ENCODE measurements at regions of chr5 and their contacts with region 1.

Region 1: DNA sequence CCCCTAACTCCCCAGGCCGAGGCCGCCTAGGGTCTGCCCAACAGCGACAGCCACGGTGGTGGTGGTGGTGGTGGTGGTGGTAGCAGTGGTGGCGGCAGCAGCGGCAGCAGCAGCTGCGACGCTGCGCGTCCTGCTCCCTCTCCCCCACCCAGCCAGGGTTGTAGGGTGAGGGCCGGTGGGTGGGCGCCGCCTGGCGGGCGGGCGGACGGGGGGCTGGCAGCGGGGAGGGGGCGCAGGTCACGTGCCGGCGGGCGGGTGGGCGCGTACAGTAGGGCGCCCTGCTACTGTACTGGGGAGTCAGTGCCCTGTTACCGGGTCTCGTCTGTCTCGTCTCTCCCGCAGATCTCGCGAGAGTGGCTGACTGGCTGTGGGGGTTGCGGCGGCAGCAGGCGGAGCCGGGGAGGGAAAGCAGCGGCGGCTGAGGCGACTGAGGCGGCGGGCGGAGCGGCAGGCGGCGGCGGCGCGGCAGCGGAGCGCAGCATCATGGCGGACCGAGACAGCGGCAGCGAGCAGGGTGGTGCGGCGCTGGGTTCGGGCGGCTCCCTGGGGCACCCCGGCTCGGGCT is at the start of gene PURA:
- DNase-seq: peak; percentile 94 to 98 (median 97)
- ATAC-seq: peak; percentile 93
- H3K4me3 ChIP-seq: peak within 1 kb of the TSS; percentile 77
- H3K4me3 Mint-ChIP-seq: peak within 1 kb of the TSS; percentile 86 to 97 (median 94)
- H3K27ac ChIP-seq: peak within 1 kb of the TSS; percentile 89
- H3K27ac Mint-ChIP-seq: peak within 1 kb of the TSS; percentile 88 to 99 (median 95)
- H3K4me1 ChIP-seq: peaks cover 46 to 57% of the 10 kb centered on the region in 2 donors
- H3K4me1 Mint-ChIP-seq: peaks cover 53 to 95% (median 77%) of the 10 kb centered on the region in 7 donors
- H3K27me3 ChIP-seq: peaks cover 0 to 7% of the 10 kb centered on the region in 2 donors
- H3K27me3 Mint-ChIP-seq: peaks cover 0 to 46% (median 4%) of the 10 kb centered on the region in 5 donors
- total RNA-seq, gene PURA: 11.6 to 33.5 (median 13.9) TPM

Region 2: DNA sequence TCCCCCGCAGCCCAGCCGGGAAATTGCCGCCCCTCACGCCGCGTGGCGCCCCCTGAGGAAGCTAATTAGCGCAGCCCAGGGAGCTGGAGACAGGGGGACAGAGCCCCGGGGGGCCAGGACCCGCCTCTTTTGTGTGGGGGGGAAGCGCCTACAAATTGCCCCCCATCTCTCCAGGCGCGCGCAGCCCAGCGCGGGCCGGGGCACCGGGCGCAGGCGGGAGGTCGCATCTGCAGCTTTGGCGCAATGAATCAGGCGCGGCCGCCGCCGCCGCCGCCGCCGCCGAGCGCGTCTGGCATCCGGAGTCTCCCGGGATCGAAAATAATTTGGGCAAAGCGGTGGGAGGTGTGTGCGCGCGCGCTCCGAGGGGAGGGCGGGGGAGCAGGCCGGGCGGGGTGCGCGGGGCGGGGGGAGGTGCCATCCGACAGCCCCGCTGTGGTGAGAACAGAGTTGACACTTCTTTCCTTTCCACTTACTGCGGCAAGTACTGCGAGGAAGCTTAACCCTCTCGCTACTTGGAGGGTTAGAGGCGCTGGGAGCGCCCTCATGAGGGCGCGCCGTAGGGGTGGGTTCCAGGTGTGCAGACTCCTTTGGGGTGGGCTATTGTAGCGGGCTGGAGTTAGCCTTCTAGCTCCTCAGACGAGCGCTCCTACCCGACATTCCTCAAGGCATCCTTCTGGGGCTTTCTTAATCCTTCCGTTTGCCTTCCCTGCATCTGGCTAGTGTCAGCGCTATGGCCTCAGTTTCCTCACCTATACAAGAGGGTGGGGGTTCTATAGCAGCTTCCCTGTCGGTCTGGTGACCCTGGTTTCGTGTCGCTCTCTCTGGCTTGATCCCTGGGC is 402.5 kb before region 1 on chr5:
- CTCF ChIA-PET with region 1: no interaction called
- POLR2A ChIA-PET with region 1: no interaction called
- intact Hi-C with region 1: loop called in 1 of 2 experiments (anchors 2 kb)
- DNase-seq: peak; percentile 37 to 74 (median 53)
- ATAC-seq: peak; percentile 75
- H3K4me3 ChIP-seq: peak overlapping the region; percentile 58
- H3K4me3 Mint-ChIP-seq: peak overlapping the region; percentile 74 to 85 (median 80)
- H3K27ac ChIP-seq: peak overlapping the region; percentile 63
- H3K27ac Mint-ChIP-seq: peak overlapping the region in 6 of 9 donors; percentile 25 to 87 (median 64)
- H3K4me1 ChIP-seq: peaks cover 14 to 19% of the 10 kb centered on the region in 2 donors
- H3K4me1 Mint-ChIP-seq: peaks cover 10 to 31% (median 23%) of the 10 kb centered on the region in 7 donors
- H3K27me3 ChIP-seq: no peaks in the 10 kb centered on the region
- H3K27me3 Mint-ChIP-seq: peaks cover 0 to 51% (median 0%) of the 10 kb centered on the region in 5 donors

Region 3: DNA sequence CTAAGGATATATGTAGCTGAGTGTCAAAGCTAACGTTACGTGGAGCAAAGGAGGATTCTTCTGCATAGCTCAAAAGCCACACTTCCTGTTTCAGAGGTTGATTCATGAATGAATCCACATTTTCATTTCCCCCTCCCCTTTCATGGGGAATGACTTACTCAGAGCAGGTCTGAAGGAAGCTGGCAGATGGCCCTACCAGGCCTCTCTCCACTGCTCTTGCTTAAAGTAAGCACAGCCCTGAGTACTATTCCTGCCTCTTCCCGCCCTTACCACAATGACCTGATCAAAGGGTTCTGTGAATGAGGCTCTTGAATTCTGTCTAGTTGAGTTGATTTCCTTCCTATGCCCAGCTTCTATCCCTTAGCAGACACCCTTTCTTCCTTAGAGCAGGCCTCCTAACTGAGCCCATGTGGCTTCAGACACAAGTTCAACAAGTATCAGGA is 18.2 kb after region 1 on chr5:
- CTCF ChIA-PET with region 1: interaction called, 4 read pairs
- POLR2A ChIA-PET with region 1: interaction called, 7 read pairs
- intact Hi-C with region 1: loop called in 1 of 2 experiments (anchors 1 kb)
- DNase-seq: peak in 2 of 9 donors; percentile 18 to 36
- ATAC-seq: peak; percentile 85
- H3K4me3 ChIP-seq: no peak overlapping the region
- H3K4me3 Mint-ChIP-seq: peak overlapping the region in 6 of 10 donors; percentile 18 to 59 (median 45)
- H3K27ac ChIP-seq: no peak overlapping the region
- H3K27ac Mint-ChIP-seq: peak overlapping the region in 5 of 9 donors; percentile 0 to 62 (median 40)
- H3K4me1 ChIP-seq: peaks cover 8 to 14% of the 10 kb centered on the region in 2 donors
- H3K4me1 Mint-ChIP-seq: peaks cover 30 to 69% (median 53%) of the 10 kb centered on the region in 7 donors
- H3K27me3 ChIP-seq: no peaks in the 10 kb centered on the region
- H3K27me3 Mint-ChIP-seq: peaks cover 0 to 5% (median 0%) of the 10 kb centered on the region in 5 donors

Region 4: DNA sequence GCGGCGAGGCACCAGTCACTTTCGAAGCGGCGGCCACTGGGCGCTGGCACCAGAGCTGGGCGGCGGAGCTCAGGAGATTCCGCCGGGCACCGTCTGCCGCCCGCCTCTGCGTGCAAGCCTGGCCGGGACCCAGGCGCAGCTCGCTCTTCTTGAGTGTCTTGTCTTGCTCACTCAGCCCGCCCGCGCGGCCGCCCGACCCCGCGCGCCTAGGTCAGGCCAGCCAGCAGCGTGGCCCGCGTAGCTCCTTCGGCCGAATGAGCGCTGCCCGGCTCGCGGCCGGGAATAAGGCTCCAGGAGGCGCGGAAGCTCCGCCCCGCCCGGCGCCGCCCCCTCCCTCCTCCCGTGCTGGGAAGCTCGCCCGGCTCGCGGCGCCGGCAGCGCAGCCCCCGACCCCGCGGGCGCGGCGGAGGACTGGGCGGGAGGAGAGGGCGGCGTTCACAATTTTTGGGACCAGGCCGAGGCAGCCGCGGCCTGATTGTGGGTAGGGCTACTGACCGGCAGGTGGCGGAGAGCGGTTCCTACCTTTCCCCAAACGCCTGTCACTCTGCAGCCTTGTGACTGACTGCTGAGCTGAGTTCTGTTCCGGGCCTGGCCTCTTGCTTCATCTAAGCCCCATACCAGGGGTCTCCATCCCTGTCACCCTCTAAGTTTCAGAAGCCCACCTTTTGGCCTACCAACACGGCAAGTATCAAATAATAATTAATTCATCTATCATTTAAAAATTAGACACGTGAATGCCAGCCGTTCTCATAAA is 232.7 kb after region 1 on chr5 and contains the start of gene HBEGF:
- CTCF ChIA-PET with region 1: no interaction called
- POLR2A ChIA-PET with region 1: no interaction called
- intact Hi-C with region 1: loop called in 1 of 2 experiments (anchors 10 kb)
- DNase-seq: peak; percentile 19 to 74 (median 42)
- ATAC-seq: peak; percentile 73
- H3K4me3 ChIP-seq: peak within 1 kb of the TSS; percentile 49
- H3K4me3 Mint-ChIP-seq: peak within 1 kb of the TSS; percentile 73 to 91 (median 84)
- H3K27ac ChIP-seq: peak within 1 kb of the TSS; percentile 57
- H3K27ac Mint-ChIP-seq: peak within 1 kb of the TSS in 8 of 9 donors; percentile 33 to 94 (median 62)
- H3K4me1 ChIP-seq: peaks cover 10 to 40% of the 10 kb centered on the region in 2 donors
- H3K4me1 Mint-ChIP-seq: peaks cover 33 to 68% (median 52%) of the 10 kb centered on the region in 7 donors
- H3K27me3 ChIP-seq: no peaks in the 10 kb centered on the region
- H3K27me3 Mint-ChIP-seq: peaks cover 0 to 17% (median 5%) of the 10 kb centered on the region in 5 donors
- total RNA-seq, gene HBEGF: 0.35 to 95.5 (median 11.6) TPM

Region 5: GRCh38 chr5:140647042-140647341 is 533.2 kb after region 1 on chr5:
- CTCF ChIA-PET with region 1: no interaction called
- POLR2A ChIA-PET with region 1: no interaction called
- intact Hi-C with region 1: loop called (anchors 1 to 2 kb)
- DNase-seq: no peak
- ATAC-seq: no peak
- H3K4me3 ChIP-seq: peak overlapping the region; percentile 80
- H3K4me3 Mint-ChIP-seq: peak overlapping the region; percentile 88 to 100 (median 98)
- H3K27ac ChIP-seq: peak overlapping the region; percentile 95
- H3K27ac Mint-ChIP-seq: peak overlapping the region; percentile 93 to 100 (median 99)
- H3K4me1 ChIP-seq: peaks cover 18% of the 10 kb centered on the region in 2 donors
- H3K4me1 Mint-ChIP-seq: peaks cover 32 to 72% (median 61%) of the 10 kb centered on the region in 7 donors
- H3K27me3 ChIP-seq: no peaks in the 10 kb centered on the region
- H3K27me3 Mint-ChIP-seq: no peaks in the 10 kb centered on the region